PC-3 (cell line): ENCODE measurements at regions of chr1 and their contacts with region 1.

Region 1: GRCh38 chr1:40849801-40850592 is 12.2 kb downstream of the CITED4 start:
- DNase-seq: peak; percentile 78
- ATAC-seq: peak; percentile 75
- H3K4me3 ChIP-seq: no peak overlapping the region
- H3K27ac ChIP-seq: no peak overlapping the region
- H3K4me1 ChIP-seq: 0 out of 2 replicates have a peak, but pooled peaks cover 10% of the 10 kb centered on the region
- H3K27me3 ChIP-seq: no peaks in the 10 kb centered on the region
- CTCF ChIP-seq: peak; percentile 90

Region 2: GRCh38 chr1:40612345-40612831 is 237.6 kb before region 1 on chr1:
- CTCF ChIA-PET with region 1: no interaction called
- POLR2A ChIA-PET with region 1: no interaction called
- intact Hi-C with region 1: loop called (anchors 1 kb)
- DNase-seq: peak; percentile 85
- ATAC-seq: peak; percentile 99
- H3K4me3 ChIP-seq: peak overlapping the region; percentile 55; the same call in 1 of the 2 replicates
- H3K27ac ChIP-seq: no peak overlapping the region
- H3K4me1 ChIP-seq: no peaks in the 10 kb centered on the region
- H3K27me3 ChIP-seq: no peaks in the 10 kb centered on the region
- CTCF ChIP-seq: peak; percentile 92

Region 3: DNA sequence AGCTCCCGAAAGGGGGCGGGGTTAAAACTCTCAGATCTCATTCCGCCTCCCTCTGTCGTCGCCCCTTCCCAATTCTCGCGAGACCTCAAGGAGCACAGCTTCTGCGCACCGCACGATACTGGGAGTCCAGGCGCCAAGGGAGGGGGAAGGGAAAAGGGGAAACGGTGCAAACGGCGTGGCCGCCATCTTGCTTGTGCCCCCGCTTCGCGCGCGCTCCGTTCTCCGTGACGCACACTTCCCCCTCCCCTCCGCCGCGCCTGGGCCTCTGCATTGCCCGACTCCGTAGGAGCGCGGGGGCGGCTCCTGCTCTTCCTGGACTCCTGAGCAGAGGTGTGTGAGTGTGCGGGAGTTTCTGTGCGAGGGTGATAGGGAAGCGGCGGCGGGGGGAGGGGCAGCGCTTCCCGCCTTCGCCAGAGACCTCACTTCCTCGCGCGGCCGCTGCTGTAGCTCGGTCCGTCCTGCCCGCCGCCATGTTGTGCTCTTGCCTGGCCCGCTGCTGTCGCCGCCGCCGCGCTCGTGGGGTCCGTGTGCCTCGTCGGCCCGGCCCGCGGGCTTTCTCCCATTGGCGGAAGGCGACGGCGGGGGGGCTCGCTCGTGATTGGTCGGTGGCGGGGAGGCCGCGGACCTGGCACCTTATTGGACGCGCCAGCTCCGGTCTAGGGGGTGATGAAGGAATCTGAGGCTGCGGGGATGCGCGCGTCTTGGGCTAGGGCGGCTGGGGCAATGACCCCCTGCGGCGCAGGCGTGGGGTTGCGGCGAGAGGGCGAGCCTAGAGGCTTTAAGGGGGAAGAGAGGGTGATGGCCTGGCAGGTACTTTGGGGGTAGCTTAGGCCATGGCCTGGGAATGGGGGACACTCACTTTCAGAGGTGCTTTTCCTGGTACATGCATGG is 158.2 kb before region 1 on chr1 and contains the start of gene NFYC:
- CTCF ChIA-PET with region 1: no interaction called
- POLR2A ChIA-PET with region 1: interaction called, 16 read pairs
- intact Hi-C with region 1: no loop called
- DNase-seq: peak; percentile 99
- ATAC-seq: peak; percentile 86
- H3K4me3 ChIP-seq: peak within 1 kb of the TSS; percentile 92
- H3K27ac ChIP-seq: peak within 1 kb of the TSS; percentile 95
- H3K4me1 ChIP-seq: peaks cover 32% of the 10 kb centered on the region
- H3K27me3 ChIP-seq: no peaks in the 10 kb centered on the region
- CTCF ChIP-seq: no peak
- total RNA-seq, gene NFYC: 49.4 and 52.6 TPM in 2 replicates

Region 4: GRCh38 chr1:40774266-40774998 is 75.6 kb before region 1 on chr1:
- CTCF ChIA-PET with region 1: interaction called, 4 read pairs
- POLR2A ChIA-PET with region 1: no interaction called
- intact Hi-C with region 1: loop called (anchors 5 kb)
- DNase-seq: peak; percentile 67
- ATAC-seq: peak; percentile 72
- H3K4me3 ChIP-seq: no peak overlapping the region
- H3K27ac ChIP-seq: no peak overlapping the region
- H3K4me1 ChIP-seq: no peaks in the 10 kb centered on the region
- H3K27me3 ChIP-seq: no peaks in the 10 kb centered on the region
- CTCF ChIP-seq: peak; percentile 92

Region 5: GRCh38 chr1:41003640-41004220 is 153.7 kb after region 1 on chr1:
- CTCF ChIA-PET with region 1: interaction called, 8 read pairs
- POLR2A ChIA-PET with region 1: no interaction called
- intact Hi-C with region 1: loop called (anchors 1 kb)
- DNase-seq: peak; percentile 99
- ATAC-seq: peak; percentile 99
- H3K4me3 ChIP-seq: no peak overlapping the region
- H3K27ac ChIP-seq: peak overlapping the region; percentile 7; the same call in 1 of the 2 replicates
- H3K4me1 ChIP-seq: peaks cover 18% of the 10 kb centered on the region
- H3K27me3 ChIP-seq: no peaks in the 10 kb centered on the region
- CTCF ChIP-seq: peak; percentile 80